MCF 10A (cell line): ENCODE measurements at regions of chr1 and their contacts with region 1.

Region 1: GRCh38 chr1:11838349-11839272 is 9.0 kb downstream of the NPPA start:
- DNase-seq: peak; percentile 59
- H3K4me3 Mint-ChIP-seq: no peak overlapping the region
- H3K27ac Mint-ChIP-seq: no peak overlapping the region
- H3K4me1 Mint-ChIP-seq: no peaks in the 10 kb centered on the region
- H3K27me3 Mint-ChIP-seq: no peaks in the 10 kb centered on the region
- CTCF ChIP-seq: peak; percentile 99

Region 2: GRCh38 chr1:11522400-11523235 is 316.0 kb before region 1 on chr1:
- CTCF ChIA-PET with region 1: no interaction called
- POLR2A ChIA-PET with region 1: no interaction called
- intact Hi-C with region 1: no loop called
- DNase-seq: no peak
- H3K4me3 Mint-ChIP-seq: no peak overlapping the region
- H3K27ac Mint-ChIP-seq: no peak overlapping the region
- H3K4me1 Mint-ChIP-seq: no peaks in the 10 kb centered on the region
- H3K27me3 Mint-ChIP-seq: no peaks in the 10 kb centered on the region
- CTCF ChIP-seq: no peak

Region 3: GRCh38 chr1:11855430-11855829 is 16.8 kb after region 1 on chr1:
- CTCF ChIA-PET with region 1: interaction called, 17 read pairs
- POLR2A ChIA-PET with region 1: interaction called, 4 read pairs
- intact Hi-C with region 1: no loop called
- DNase-seq: no peak
- H3K4me3 Mint-ChIP-seq: no peak overlapping the region
- H3K27ac Mint-ChIP-seq: no peak overlapping the region
- H3K4me1 Mint-ChIP-seq: no peaks in the 10 kb centered on the region
- H3K27me3 Mint-ChIP-seq: peaks cover 61% of the 10 kb centered on the region
- CTCF ChIP-seq: no peak

Region 4: DNA sequence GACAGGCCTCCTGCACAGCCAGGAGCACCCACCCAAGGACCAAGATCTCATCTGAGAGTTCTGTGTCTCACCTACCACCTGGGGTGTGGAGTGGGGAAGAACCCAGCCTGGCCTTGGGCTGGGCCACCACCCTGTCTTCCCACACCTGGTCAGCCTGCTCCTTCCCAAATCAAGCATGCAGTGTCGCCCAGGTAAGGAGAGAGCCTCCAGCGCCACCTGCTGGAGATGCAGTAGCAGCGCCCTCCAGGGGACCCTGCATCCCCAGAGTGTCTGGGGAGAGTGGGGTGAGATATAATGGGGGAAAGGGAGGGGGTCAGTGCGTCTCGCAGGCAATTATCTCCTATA is 55.3 kb after region 1 on chr1:
- CTCF ChIA-PET with region 1: interaction called, 37 read pairs
- POLR2A ChIA-PET with region 1: no interaction called
- intact Hi-C with region 1: loop called (anchors 1 kb)
- DNase-seq: peak; percentile 63
- H3K4me3 Mint-ChIP-seq: no peak overlapping the region
- H3K27ac Mint-ChIP-seq: no peak overlapping the region
- H3K4me1 Mint-ChIP-seq: no peaks in the 10 kb centered on the region
- H3K27me3 Mint-ChIP-seq: peaks cover 3% of the 10 kb centered on the region
- CTCF ChIP-seq: peak; percentile 87

Region 5: GRCh38 chr1:11967028-11967547 is 128.5 kb after region 1 on chr1:
- CTCF ChIA-PET with region 1: interaction called, 21 read pairs
- POLR2A ChIA-PET with region 1: interaction called, 6 read pairs
- intact Hi-C with region 1: loop called (anchors 1 kb)
- DNase-seq: peak; percentile 79
- H3K4me3 Mint-ChIP-seq: peak overlapping the region; percentile 40
- H3K27ac Mint-ChIP-seq: peak overlapping the region; percentile 23
- H3K4me1 Mint-ChIP-seq: no peaks in the 10 kb centered on the region
- H3K27me3 Mint-ChIP-seq: no peaks in the 10 kb centered on the region
- CTCF ChIP-seq: peak; percentile 65